Prostate gland (tissue), 2 donors: ENCODE measurements at regions of chr19 and their contacts with region 1.

Region 1: GRCh38 chr19:56111601-56112312 is 9.3 kb downstream of the ZNF787 start:
- DNase-seq: no peak
- H3K4me3 ChIP-seq: no peak overlapping the region
- H3K27ac ChIP-seq: peak overlapping the region; percentile 37 to 71
- H3K4me1 ChIP-seq: peaks cover 43% of the 10 kb centered on the region
- H3K27me3 ChIP-seq: no peaks in the 10 kb centered on the region
- CTCF ChIP-seq: no peak
- POLR2A ChIP-seq: no peak

Region 2: DNA sequence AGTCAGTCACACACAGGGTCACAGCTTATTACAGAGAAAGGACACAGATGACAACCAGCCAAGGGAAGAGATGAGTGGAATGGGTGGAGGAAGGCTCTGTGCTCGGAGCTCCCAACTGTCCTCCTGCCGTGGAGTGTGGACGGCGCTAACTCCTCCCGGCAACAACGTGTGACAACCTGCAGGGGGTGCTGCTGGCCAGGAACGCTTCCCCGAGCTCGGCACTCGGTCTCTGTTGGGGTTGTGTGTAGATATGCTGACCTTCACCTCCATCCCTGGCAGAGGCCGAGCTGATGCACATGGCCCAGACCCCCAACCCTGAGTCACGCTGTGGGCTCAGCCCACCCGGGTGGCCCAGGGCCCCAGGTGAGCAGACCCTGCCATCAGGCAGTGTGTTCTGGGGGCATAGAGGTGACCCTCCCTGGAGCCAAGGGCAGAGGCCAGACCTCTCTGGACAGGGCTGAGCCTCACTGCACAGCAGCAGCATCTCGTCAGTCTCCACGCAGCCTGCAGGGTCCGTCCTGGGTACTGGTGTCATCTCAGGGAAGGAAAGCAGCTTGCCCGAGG is 43.4 kb after region 1 on chr19:
- intact Hi-C with region 1: loop called (anchors 5 kb)
- DNase-seq: no peak
- H3K4me3 ChIP-seq: no peak overlapping the region
- H3K27ac ChIP-seq: no peak overlapping the region
- H3K4me1 ChIP-seq: no peaks in the 10 kb centered on the region
- H3K27me3 ChIP-seq: no peaks in the 10 kb centered on the region
- CTCF ChIP-seq: peak in 1 of 4 experiments; percentile 15
- POLR2A ChIP-seq: no peak